Naive thymus-derived CD4-positive, alpha-beta T cell (primary cell): ENCODE measurements at regions of chr9 and their contacts with region 1.

Region 1: GRCh38 chr9:33024966-33025571 is at the start of gene DNAJA1:
- DNase-seq: peak; percentile 92 to 99 (median 97)
- ATAC-seq: peak; percentile 91
- H3K4me3 ChIP-seq: peak within 1 kb of the TSS; percentile 98
- H3K4me3 Mint-ChIP-seq: peak within 1 kb of the TSS; percentile 91 to 99 (median 96)
- H3K27ac ChIP-seq: peak within 1 kb of the TSS; percentile 100
- H3K27ac Mint-ChIP-seq: peak within 1 kb of the TSS; percentile 82 to 98 (median 95)
- H3K4me1 ChIP-seq: peaks cover 37 to 49% of the 10 kb centered on the region in 2 donors
- H3K4me1 Mint-ChIP-seq: peaks cover 51 to 83% (median 78%) of the 10 kb centered on the region in 7 donors
- H3K27me3 ChIP-seq: no peaks in the 10 kb centered on the region
- H3K27me3 Mint-ChIP-seq: no peaks in the 10 kb centered on the region
- total RNA-seq, gene DNAJA1: 66.8 to 204 (median 119) TPM

Region 2: DNA sequence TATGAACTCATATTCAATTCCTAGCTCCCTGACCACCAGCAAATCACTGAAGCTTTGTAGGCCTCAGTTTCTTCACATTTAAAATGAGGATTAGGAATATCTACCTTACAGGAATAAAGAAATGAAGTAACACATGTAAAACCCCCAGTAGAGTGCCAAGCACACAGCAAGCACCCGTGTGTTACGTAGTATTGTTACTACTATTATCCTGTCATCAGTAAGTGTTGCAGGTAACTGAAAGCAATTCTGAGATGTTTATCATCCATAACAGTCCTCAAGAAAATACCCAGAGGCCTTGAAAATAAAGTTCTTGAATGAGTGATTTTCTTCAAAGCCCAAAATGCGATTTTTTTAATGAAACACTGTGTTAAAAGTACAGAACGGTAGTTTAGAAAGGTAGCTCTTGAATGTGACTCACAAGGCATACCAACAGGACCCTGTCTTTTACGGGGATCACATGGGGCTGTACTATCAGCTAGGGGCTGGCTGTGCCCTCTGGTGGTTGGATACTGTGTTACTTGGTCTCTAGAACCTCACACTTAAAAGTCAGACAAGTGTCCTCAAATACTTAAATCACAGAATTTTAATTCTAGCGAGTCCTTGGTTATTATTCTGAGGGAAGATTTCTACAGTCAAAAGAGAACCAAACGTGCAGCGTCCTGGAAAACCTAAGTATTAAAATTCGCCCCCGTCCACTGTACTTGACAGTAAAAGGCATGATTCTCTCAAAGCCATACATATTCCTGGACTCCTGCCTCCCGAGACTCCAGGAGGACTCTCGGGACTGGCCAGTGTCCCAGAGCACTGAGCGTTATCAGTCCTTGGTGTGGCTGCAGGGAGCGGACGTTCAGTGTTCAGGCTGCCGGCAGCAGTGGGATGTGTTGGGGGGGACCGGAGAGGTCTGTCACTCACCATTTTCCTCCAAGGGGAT is 452.8 kb before region 1 on chr9:
- CTCF ChIA-PET with region 1: no interaction called
- POLR2A ChIA-PET with region 1: no interaction called
- intact Hi-C with region 1: loop called (anchors 1 kb)
- DNase-seq: peak; percentile 33 to 85 (median 77)
- ATAC-seq: peak; percentile 92
- H3K4me3 ChIP-seq: peak overlapping the region; percentile 92
- H3K4me3 Mint-ChIP-seq: peak overlapping the region; percentile 98 to 100 (median 99)
- H3K27ac ChIP-seq: peak overlapping the region; percentile 86
- H3K27ac Mint-ChIP-seq: peak overlapping the region; percentile 93 to 99 (median 99)
- H3K4me1 ChIP-seq: peaks cover 14 to 22% of the 10 kb centered on the region in 2 donors
- H3K4me1 Mint-ChIP-seq: peaks cover 18 to 43% (median 30%) of the 10 kb centered on the region in 7 donors
- H3K27me3 ChIP-seq: no peaks in the 10 kb centered on the region
- H3K27me3 Mint-ChIP-seq: peaks cover 0 to 10% (median 0%) of the 10 kb centered on the region in 5 donors

Region 3: DNA sequence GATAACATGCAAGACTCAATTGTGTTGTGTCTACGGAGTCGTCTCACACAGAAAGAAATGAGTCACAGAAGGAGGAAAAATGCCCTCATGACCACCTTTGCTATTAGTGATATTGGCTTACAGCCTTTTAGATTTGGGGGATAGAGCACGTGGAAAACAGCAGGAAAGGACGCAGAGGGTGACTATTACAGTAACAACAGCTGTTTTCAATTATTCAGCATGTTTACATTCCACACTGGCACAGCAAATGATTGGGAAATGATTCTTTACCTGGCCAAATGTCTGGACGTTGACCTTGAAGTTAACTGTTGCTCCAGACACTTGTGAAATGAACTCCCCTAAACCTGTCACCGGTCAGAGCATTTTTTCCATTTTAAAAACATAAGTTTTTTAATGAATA is 70.4 kb before region 1 on chr9:
- CTCF ChIA-PET with region 1: no interaction called
- POLR2A ChIA-PET with region 1: no interaction called
- intact Hi-C with region 1: no loop called
- DNase-seq: no peak
- ATAC-seq: no peak
- H3K4me3 ChIP-seq: no peak overlapping the region
- H3K4me3 Mint-ChIP-seq: no peak overlapping the region
- H3K27ac ChIP-seq: no peak overlapping the region
- H3K27ac Mint-ChIP-seq: no peak overlapping the region
- H3K4me1 ChIP-seq: no peaks in the 10 kb centered on the region
- H3K4me1 Mint-ChIP-seq: no peaks in the 10 kb centered on the region
- H3K27me3 ChIP-seq: no peaks in the 10 kb centered on the region
- H3K27me3 Mint-ChIP-seq: peaks cover 0 to 4% (median 0%) of the 10 kb centered on the region in 5 donors

Region 4: DNA sequence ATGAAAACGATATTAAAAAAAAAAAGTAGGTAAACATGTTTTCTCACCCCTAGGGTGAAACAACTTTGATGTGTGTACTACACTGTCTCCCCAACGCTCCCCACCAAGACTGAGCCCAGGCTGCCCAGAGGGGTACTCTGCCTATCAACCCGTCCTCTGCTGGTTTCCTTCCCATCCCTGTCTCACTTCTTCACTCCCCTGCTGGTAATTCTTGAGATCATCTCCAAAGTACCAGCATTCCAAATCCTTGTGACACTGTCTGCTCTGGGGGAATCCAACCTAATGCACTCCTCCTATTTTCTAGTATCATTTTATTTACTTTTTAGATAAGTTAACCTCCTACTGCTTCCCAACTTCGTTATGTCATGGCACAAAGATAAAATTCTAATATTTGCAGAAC is 17.3 kb before region 1 on chr9:
- CTCF ChIA-PET with region 1: no interaction called
- POLR2A ChIA-PET with region 1: interaction called, 13 read pairs
- intact Hi-C with region 1: no loop called
- DNase-seq: no peak
- ATAC-seq: no peak
- H3K4me3 ChIP-seq: no peak overlapping the region
- H3K4me3 Mint-ChIP-seq: no peak overlapping the region
- H3K27ac ChIP-seq: no peak overlapping the region
- H3K27ac Mint-ChIP-seq: peak overlapping the region in 1 of 9 donors; percentile 37
- H3K4me1 ChIP-seq: no peaks in the 10 kb centered on the region
- H3K4me1 Mint-ChIP-seq: peaks cover 0 to 12% (median under 1%) of the 10 kb centered on the region in 7 donors
- H3K27me3 ChIP-seq: no peaks in the 10 kb centered on the region
- H3K27me3 Mint-ChIP-seq: no peaks in the 10 kb centered on the region

Region 5: GRCh38 chr9:33044127-33044673 is 19.1 kb after region 1 on chr9:
- CTCF ChIA-PET with region 1: no interaction called
- POLR2A ChIA-PET with region 1: interaction called, 9 read pairs
- intact Hi-C with region 1: loop called (anchors 2 kb)
- DNase-seq: peak; percentile 43 to 74 (median 50)
- ATAC-seq: peak; percentile 80
- H3K4me3 ChIP-seq: peak overlapping the region; percentile 56
- H3K4me3 Mint-ChIP-seq: peak overlapping the region; percentile 69 to 91 (median 82)
- H3K27ac ChIP-seq: peak overlapping the region; percentile 68
- H3K27ac Mint-ChIP-seq: peak overlapping the region; percentile 59 to 92 (median 79)
- H3K4me1 ChIP-seq: peaks cover 0 to 6% of the 10 kb centered on the region in 2 donors
- H3K4me1 Mint-ChIP-seq: peaks cover 8 to 24% (median 19%) of the 10 kb centered on the region in 7 donors
- H3K27me3 ChIP-seq: no peaks in the 10 kb centered on the region
- H3K27me3 Mint-ChIP-seq: no peaks in the 10 kb centered on the region

Region 6: DNA sequence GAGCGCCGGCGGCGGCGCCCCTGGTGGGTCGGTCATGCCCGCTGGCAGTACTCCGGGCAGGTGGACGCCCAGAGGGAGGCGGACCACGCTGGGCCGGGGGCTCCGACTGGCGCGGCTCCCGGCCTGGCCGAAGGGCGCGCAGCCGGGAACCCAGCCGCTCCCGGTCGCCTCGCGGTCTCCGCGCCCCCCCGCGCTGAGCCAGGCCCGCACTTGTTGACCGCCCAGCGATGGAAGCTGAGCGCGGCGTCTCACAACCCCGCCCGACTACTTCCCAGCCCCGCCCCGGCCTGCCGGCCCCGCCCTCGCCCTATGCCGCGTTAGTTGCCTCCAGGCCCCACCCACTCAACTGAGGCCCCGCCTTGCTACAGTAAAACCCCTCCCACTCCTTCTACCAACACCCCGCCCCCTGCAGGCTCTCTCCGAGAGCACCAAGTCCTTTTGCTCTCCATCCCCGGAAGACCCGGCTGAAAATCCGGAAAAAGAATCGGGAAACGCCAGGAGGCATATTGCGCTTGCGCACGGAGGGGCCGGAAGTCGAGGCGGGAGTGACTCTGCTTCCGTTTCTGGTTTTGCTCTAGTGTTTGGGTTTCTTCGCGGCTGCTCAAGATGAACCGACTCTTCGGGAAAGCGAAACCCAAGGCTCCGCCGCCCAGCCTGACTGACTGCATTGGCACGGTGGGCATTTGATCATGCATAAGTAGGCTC is 239.6 kb after region 1 on chr9 and contains the starts of genes BAG1 and CHMP5:
- CTCF ChIA-PET with region 1: no interaction called
- POLR2A ChIA-PET with region 1: interaction called, 4 read pairs
- intact Hi-C with region 1: loop called (anchors 1 kb)
- DNase-seq: peak; percentile 98 to 100 (median 100)
- ATAC-seq: peak; percentile 99
- H3K4me3 ChIP-seq: peak within 1 kb of the TSS; percentile 95
- H3K4me3 Mint-ChIP-seq: peak within 1 kb of the TSS; percentile 82 to 98 (median 92)
- H3K27ac ChIP-seq: peak within 1 kb of the TSS; percentile 88
- H3K27ac Mint-ChIP-seq: peak within 1 kb of the TSS; percentile 84 to 99 (median 97)
- H3K4me1 ChIP-seq: peaks cover 15 to 34% of the 10 kb centered on the region in 2 donors
- H3K4me1 Mint-ChIP-seq: peaks cover 36 to 66% (median 55%) of the 10 kb centered on the region in 7 donors
- H3K27me3 ChIP-seq: no peaks in the 10 kb centered on the region
- H3K27me3 Mint-ChIP-seq: peaks cover 0 to 2% (median 0%) of the 10 kb centered on the region in 5 donors
- total RNA-seq, gene BAG1: 48.6 to 77.2 (median 61.0) TPM
- total RNA-seq, gene CHMP5: 21.4 to 74.6 (median 35.3) TPM

Region 7: GRCh38 chr9:34961574-34962490 is 1936.8 kb after region 1 on chr9:
- CTCF ChIA-PET with region 1: no interaction called
- POLR2A ChIA-PET with region 1: no interaction called
- intact Hi-C with region 1: no loop called
- DNase-seq: peak in 1 of 9 donors; percentile 51
- ATAC-seq: no peak
- H3K4me3 ChIP-seq: no peak overlapping the region
- H3K4me3 Mint-ChIP-seq: no peak overlapping the region
- H3K27ac ChIP-seq: no peak overlapping the region
- H3K27ac Mint-ChIP-seq: no peak overlapping the region
- H3K4me1 ChIP-seq: peaks cover 0 to 6% of the 10 kb centered on the region in 2 donors
- H3K4me1 Mint-ChIP-seq: peaks cover 0 to 19% (median 0%) of the 10 kb centered on the region in 7 donors
- H3K27me3 ChIP-seq: no peaks in the 10 kb centered on the region
- H3K27me3 Mint-ChIP-seq: peaks cover 34 to 72% (median 61%) of the 10 kb centered on the region in 5 donors